ENCODE measurements at regions of chr3 and their contacts with region 1.

Region 1: DNA sequence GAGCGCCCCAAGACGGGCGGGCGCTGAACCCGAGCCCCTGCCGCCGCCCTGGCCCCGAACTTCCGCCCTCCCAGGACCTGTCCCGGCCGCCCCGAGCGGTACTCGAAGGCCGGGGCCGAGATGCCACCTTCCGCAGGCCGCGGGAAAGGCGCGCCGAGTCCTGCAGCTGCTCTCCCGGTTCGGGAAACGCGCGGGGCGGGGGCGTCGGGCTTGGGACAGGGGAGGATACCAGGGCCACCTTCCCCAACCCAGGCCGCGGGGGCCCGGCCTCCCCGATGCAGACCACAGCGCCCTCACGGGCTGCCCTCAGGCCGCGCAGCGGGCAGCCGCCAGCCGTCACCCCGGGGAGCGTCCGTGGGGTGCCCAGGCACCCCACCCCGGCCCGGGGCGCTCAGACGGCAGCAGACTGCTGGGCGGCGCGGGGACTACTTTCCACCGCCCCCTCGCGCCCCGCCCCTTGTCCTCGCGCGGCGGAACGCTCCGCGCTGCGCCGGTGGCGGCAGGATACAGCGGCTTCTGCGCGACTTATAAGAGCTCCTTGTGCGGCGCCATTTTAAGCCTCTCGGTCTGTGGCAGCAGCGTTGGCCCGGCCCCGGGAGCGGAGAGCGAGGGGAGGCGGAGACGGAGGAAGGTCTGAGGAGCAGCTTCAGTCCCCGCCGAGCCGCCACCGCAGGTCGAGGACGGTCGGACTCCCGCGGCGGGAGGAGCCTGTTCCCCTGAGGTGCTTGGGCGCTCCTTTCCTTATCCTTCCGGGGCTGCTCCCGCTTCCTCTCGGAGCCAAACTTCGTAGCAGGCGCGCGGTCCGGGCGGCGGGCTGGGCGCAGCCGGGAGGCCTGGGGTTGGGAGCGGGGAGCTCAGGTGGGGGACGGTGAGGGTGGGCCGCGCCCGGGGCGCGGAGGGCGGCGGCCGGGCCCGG is at the start of gene CTNNB1:
- DNase-seq: peak; percentile 87
- H3K4me3 Mint-ChIP-seq: peak within 1 kb of the TSS; percentile 97
- H3K27ac Mint-ChIP-seq: peak within 1 kb of the TSS; percentile 98
- H3K4me1 Mint-ChIP-seq: peaks cover 36% of the 10 kb centered on the region
- H3K27me3 Mint-ChIP-seq: peaks cover 22% of the 10 kb centered on the region
- total RNA-seq, gene CTNNB1: 137 and 139 TPM in 2 replicates

Region 2: GRCh38 chr3:39724233-39724846 is 1474.9 kb before region 1 on chr3:
- intact Hi-C with region 1: no loop called
- DNase-seq: no peak
- H3K4me3 Mint-ChIP-seq: no peak overlapping the region
- H3K27ac Mint-ChIP-seq: no peak overlapping the region
- H3K4me1 Mint-ChIP-seq: no peaks in the 10 kb centered on the region
- H3K27me3 Mint-ChIP-seq: no peaks in the 10 kb centered on the region

Region 3: DNA sequence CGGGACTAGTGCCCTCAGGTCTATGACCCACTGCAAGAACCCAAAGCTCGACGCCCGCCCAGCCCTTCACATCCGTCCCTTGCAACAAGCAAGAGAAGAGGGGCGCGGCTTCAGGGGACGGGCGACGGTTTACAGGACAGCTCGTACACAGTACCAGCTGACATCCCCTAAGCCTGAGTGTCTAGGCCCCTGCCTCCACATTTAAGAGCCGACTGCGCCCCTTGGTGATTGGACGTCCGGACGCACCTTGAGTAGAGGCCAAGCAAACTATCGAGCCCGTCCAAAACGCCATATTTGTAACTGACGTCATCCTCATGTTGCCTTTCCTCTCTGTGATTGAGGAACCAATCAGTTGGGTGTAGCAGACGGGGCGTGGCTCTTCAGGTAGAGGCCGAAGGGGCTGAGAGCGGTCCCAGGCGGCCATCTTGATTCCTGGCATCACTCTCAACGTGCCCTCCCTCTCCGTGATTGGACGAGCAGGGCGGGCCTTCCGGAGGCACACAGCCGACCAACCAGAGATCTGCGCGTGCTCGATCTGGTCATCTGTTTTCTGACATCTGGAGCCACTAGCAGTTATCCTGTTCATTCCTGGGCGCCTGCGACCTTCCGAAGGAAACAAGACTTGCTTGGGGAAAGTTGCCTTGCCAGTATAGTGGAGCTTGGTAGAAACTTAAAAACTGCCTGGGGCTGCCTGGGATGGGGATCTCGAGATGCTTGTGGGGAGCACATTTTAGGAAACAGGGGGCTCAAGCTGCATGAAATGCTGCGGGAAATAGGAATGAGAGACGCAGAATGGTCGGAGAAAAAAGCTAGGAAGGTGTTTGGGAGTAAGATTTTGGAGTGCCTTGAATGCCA is 746.1 kb before region 1 on chr3:
- intact Hi-C with region 1: loop called (anchors 1 kb)
- DNase-seq: peak; percentile 95
- H3K4me3 Mint-ChIP-seq: peak overlapping the region; percentile 91
- H3K27ac Mint-ChIP-seq: peak overlapping the region; percentile 96
- H3K4me1 Mint-ChIP-seq: peaks cover 40% of the 10 kb centered on the region
- H3K27me3 Mint-ChIP-seq: no peaks in the 10 kb centered on the region

Region 4: GRCh38 chr3:40580494-40581091 is 618.6 kb before region 1 on chr3:
- intact Hi-C with region 1: loop called (anchors 5 kb)
- DNase-seq: peak; percentile 39
- H3K4me3 Mint-ChIP-seq: no peak overlapping the region
- H3K27ac Mint-ChIP-seq: no peak overlapping the region
- H3K4me1 Mint-ChIP-seq: no peaks in the 10 kb centered on the region
- H3K27me3 Mint-ChIP-seq: peaks cover 4% of the 10 kb centered on the region

Region 5: GRCh38 chr3:41117398-41117870 is 81.8 kb before region 1 on chr3:
- intact Hi-C with region 1: loop called (anchors 1 kb)
- DNase-seq: peak; percentile 70
- H3K4me3 Mint-ChIP-seq: no peak overlapping the region
- H3K27ac Mint-ChIP-seq: peak overlapping the region; percentile 67
- H3K4me1 Mint-ChIP-seq: peaks cover 24% of the 10 kb centered on the region
- H3K27me3 Mint-ChIP-seq: no peaks in the 10 kb centered on the region

Region 6: GRCh38 chr3:41216993-41217392 is 17.8 kb after region 1 on chr3:
- intact Hi-C with region 1: loop called (anchors 2 kb)
- DNase-seq: no peak
- H3K4me3 Mint-ChIP-seq: no peak overlapping the region
- H3K27ac Mint-ChIP-seq: peak overlapping the region; percentile 7
- H3K4me1 Mint-ChIP-seq: peaks cover 67% of the 10 kb centered on the region
- H3K27me3 Mint-ChIP-seq: no peaks in the 10 kb centered on the region

Region 7: DNA sequence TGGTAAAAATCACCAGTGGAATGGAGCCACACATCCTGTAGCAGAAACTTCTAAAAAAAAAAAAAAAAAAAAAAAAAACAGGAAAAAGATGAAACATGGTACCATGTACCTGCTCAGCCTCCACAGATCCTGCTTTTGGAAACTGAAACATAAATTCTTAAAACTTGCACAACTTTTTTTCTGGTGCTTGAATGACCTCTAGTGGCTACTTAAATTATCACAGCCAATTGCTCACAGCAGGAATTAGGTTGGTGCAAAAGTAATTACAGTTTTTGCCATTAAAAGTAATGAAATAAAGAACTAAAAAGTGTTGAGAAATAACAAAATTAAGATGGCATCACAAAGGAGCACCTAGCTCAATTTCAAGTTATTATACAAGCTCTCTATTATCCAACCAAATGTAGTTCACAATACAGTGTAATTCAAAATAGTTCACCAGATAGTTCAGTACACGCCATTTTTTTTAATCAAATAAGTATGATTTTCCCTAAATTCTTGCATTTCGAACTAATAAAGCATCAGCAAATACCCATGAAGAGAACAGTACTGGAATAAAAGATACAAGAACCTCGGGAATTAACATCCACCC is 682.1 kb after region 1 on chr3:
- intact Hi-C with region 1: loop called (anchors 5 kb)
- DNase-seq: no peak
- H3K4me3 Mint-ChIP-seq: no peak overlapping the region
- H3K27ac Mint-ChIP-seq: no peak overlapping the region
- H3K4me1 Mint-ChIP-seq: no peaks in the 10 kb centered on the region
- H3K27me3 Mint-ChIP-seq: peaks cover 1% of the 10 kb centered on the region

Region 8: DNA sequence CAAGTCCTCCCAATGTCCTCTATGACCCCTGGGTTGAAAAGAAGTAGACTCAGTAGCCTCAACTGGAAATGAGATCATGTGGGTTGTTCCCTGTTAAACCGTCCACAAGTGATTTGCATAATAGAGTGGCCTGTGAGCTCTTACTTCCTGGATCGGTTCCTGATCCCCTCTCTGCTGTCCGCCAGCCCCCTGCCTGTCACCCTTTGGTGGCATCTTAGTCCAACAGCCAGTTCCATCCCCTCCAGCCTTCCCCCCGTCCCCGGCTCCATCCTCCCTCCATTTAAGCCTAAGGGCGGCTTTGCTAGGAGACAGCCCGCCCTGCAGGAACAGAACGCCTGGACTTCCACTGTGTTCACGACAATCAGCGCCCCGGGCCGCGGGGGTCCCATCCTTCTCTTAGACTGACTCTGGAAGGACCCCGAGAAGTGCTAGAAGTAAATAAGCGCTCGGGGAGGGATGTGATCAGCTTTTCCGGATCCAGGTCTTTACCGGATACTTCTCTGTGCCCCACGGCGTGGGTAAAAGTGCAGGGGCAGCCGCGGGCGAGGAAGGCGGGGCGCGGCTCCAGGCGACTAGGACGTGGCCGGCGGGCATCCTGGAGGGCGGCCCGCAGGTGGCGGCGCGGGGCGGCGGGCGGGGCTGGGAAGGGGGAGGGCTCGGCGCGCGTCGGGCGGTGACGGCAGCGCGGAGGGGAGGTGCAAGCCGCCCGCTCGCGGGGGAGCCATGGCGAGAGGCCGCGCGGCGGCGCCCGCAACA is 813.9 kb after region 1 on chr3:
- intact Hi-C with region 1: loop called (anchors 1 kb)
- DNase-seq: peak; percentile 66
- H3K4me3 Mint-ChIP-seq: peak overlapping the region; percentile 87
- H3K27ac Mint-ChIP-seq: peak overlapping the region; percentile 91
- H3K4me1 Mint-ChIP-seq: peaks cover 47% of the 10 kb centered on the region
- H3K27me3 Mint-ChIP-seq: no peaks in the 10 kb centered on the region

Measured in activated T-helper 1 cell treated with anti-CD3 and anti-CD28 coated beads, Interleukin-12 subunit alpha, Interleukin-12 subunit beta, Interleukin-2, Interleukin-4 antibody, amounts not matched to agents 30 ng/mL and 10 ng/mL and 1 ng/mL, durations not matched to agents 14 hours and 24 hours and 36 hours (primary cell).